A673 (cell line): ENCODE measurements at regions of chr11 and their contacts with region 1.

Region 1: DNA sequence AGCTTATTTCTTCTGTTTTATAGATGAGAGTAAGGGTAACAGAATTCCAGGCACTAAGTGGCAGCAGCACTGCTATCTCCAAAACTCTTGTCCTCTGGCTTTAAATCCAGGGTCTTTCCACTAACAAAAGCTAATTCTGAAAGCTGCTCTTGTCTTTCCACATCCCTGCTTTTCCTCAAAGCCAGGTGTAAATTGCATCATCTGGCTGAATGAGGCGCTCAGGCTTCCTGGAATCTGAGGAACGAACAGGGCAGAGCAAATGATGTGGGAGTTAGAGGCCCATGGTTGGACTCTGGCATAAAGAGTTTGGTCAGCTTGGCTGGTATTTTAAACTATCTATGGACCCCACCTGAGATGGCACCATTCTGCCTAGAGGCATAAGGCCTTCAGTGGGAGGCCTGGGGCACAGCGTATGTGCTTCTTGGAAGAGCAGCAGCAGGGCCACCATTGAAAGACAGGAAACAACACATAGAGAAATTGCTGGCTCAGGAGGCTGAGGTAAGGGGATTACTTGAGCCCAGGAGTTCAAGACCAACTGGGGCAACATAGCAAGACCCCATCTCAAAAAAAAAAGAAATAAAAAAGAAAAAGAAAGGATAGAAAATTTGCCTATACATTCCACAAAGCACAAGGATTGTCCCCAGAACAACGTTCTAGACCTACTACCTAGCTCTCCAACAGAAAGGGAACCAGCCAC is 1.9 kb downstream of the KCNJ5 start:
- DNase-seq: no peak
- H3K4me3 ChIP-seq: no peak overlapping the region
- H3K27ac ChIP-seq: no peak overlapping the region
- H3K4me1 ChIP-seq: peaks cover 4% of the 10 kb centered on the region
- H3K27me3 ChIP-seq: peaks cover 14% of the 10 kb centered on the region
- CTCF ChIP-seq: no peak

Region 2: DNA sequence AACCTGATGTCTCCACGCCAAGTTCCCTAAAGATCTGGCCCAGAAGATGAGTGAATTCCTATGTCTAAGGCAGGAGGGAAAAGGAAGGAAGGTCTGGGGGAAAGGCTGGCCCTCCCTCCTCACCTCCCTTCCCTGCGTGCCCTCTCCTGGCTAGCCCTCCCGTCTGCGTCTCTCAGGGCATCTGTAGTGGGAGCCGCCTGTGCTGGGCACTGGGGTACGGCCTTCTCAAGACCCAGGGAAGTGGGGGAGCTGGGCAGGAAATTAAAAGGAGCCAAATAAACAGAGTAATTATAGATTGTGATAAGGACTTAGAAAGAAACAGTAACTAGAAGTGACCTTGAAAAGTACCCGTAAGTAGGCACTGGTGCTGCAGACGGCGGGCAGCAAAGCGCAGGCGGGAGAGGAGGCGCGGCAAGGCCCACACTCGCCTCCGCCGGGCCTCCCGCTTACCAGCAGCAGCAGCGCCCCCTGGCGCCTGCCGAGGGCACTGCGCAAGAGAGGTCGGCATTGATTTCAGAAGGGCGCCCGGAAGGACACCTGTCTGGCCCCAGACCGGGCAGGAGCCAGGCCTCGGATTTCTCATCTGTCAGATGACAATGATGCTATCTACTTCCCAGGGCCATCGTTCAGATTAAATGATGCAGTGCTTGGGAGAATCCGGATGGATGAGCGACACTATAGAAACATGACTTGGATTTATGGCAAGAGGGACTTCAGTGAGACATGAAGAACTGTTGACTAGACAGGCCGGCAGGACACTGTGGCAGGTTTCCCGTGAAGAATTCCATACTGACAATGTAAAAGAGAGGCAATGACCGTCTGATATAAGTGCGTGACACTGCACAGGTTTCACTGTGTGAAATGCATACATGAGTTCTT is 33.2 kb before region 1 on chr11:
- CTCF ChIA-PET with region 1: interaction called, 10 read pairs
- POLR2A ChIA-PET with region 1: no interaction called
- intact Hi-C with region 1: no loop called
- DNase-seq: peak; percentile 79
- H3K4me3 ChIP-seq: no peak overlapping the region
- H3K27ac ChIP-seq: no peak overlapping the region
- H3K4me1 ChIP-seq: peaks cover 5% of the 10 kb centered on the region
- H3K27me3 ChIP-seq: no peaks in the 10 kb centered on the region
- CTCF ChIP-seq: peak; percentile 100

Region 3: DNA sequence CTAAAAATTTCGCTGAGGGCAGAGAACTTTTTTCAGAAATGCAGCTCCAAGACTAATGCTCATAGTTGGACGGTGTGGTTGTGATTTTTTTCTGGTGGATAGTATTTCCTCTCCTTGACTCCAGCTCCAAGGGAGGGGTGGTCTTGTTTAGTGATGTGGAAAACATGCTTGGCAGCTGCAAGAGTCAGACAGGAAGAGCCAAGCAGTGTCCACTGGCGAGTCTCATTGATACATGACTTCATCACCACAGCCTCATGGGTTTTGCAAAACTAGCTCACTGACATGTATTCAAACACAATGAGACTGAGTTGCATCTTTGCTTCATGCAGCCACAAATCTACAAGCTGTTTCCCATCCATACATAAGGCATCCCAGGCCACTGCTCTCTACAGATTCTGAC is 18.6 kb before region 1 on chr11:
- CTCF ChIA-PET with region 1: no interaction called
- POLR2A ChIA-PET with region 1: no interaction called
- intact Hi-C with region 1: no loop called
- DNase-seq: no peak
- H3K4me3 ChIP-seq: no peak overlapping the region
- H3K27ac ChIP-seq: no peak overlapping the region
- H3K4me1 ChIP-seq: no peaks in the 10 kb centered on the region
- H3K27me3 ChIP-seq: no peaks in the 10 kb centered on the region
- CTCF ChIP-seq: no peak